ENCODE measurements at regions of chr20 and their contacts with region 1.

Region 1: GRCh38 chr20:51541189-51542032 is 1.1 kb downstream of the NFATC2 start:
- DNase-seq: peak; percentile 45 to 95 (median 74)
- ATAC-seq: peak; percentile 79
- H3K4me3 ChIP-seq: peak overlapping the region; percentile 68
- H3K4me3 Mint-ChIP-seq: peak overlapping the region; percentile 98
- H3K27ac ChIP-seq: peak overlapping the region; percentile 82 to 99
- H3K27ac Mint-ChIP-seq: peak overlapping the region; percentile 89
- H3K4me1 ChIP-seq: peaks cover 50% of the 10 kb centered on the region
- H3K4me1 Mint-ChIP-seq: peaks cover 55% of the 10 kb centered on the region
- H3K27me3 ChIP-seq: no peaks in the 10 kb centered on the region
- H3K27me3 Mint-ChIP-seq: no peaks in the 10 kb centered on the region
- CTCF ChIP-seq: no peak

Region 2: GRCh38 chr20:51385646-51386530 is 155.5 kb before region 1 on chr20:
- CTCF ChIA-PET with region 1: interaction called, 5 read pairs
- POLR2A ChIA-PET with region 1: interaction called, 3 read pairs
- intact Hi-C with region 1: loop called in 1 of 2 experiments (anchors 5 kb)
- DNase-seq: peak in 10 of 14 experiments; percentile 13 to 70 (median 34)
- ATAC-seq: peak; percentile 52
- H3K4me3 ChIP-seq: no peak overlapping the region
- H3K4me3 Mint-ChIP-seq: no peak overlapping the region
- H3K27ac ChIP-seq: no peak overlapping the region
- H3K27ac Mint-ChIP-seq: peak overlapping the region; percentile 34
- H3K4me1 ChIP-seq: peaks cover 35% of the 10 kb centered on the region
- H3K4me1 Mint-ChIP-seq: peaks cover 22% of the 10 kb centered on the region
- H3K27me3 ChIP-seq: no peaks in the 10 kb centered on the region
- H3K27me3 Mint-ChIP-seq: no peaks in the 10 kb centered on the region
- CTCF ChIP-seq: peak; percentile 57

Region 3: GRCh38 chr20:51480507-51481270 is 60.7 kb before region 1 on chr20:
- CTCF ChIA-PET with region 1: interaction called, 3 read pairs
- POLR2A ChIA-PET with region 1: interaction called, 8 read pairs
- intact Hi-C with region 1: loop called in 1 of 2 experiments (anchors 5 kb)
- DNase-seq: peak in 5 of 14 experiments; percentile 25 to 69 (median 42)
- ATAC-seq: peak; percentile 56
- H3K4me3 ChIP-seq: peak overlapping the region; percentile 12
- H3K4me3 Mint-ChIP-seq: peak overlapping the region; percentile 62
- H3K27ac ChIP-seq: peak overlapping the region; percentile 33 to 68
- H3K27ac Mint-ChIP-seq: peak overlapping the region; percentile 87
- H3K4me1 ChIP-seq: peaks cover 53% of the 10 kb centered on the region
- H3K4me1 Mint-ChIP-seq: peaks cover 90% of the 10 kb centered on the region
- H3K27me3 ChIP-seq: no peaks in the 10 kb centered on the region
- H3K27me3 Mint-ChIP-seq: no peaks in the 10 kb centered on the region
- CTCF ChIP-seq: no peak

Region 4: GRCh38 chr20:51512645-51513044 is 28.8 kb before region 1 on chr20:
- CTCF ChIA-PET with region 1: interaction called, 8 read pairs
- POLR2A ChIA-PET with region 1: interaction called, 16 read pairs
- intact Hi-C with region 1: no loop called
- DNase-seq: peak in 3 of 14 experiments; percentile 47 to 58 (median 56)
- ATAC-seq: peak; percentile 85
- H3K4me3 ChIP-seq: no peak overlapping the region
- H3K4me3 Mint-ChIP-seq: peak overlapping the region; percentile 43
- H3K27ac ChIP-seq: peak overlapping the region; percentile 32 to 35
- H3K27ac Mint-ChIP-seq: peak overlapping the region; percentile 84
- H3K4me1 ChIP-seq: peaks cover 67% of the 10 kb centered on the region
- H3K4me1 Mint-ChIP-seq: peaks cover 89% of the 10 kb centered on the region
- H3K27me3 ChIP-seq: no peaks in the 10 kb centered on the region
- H3K27me3 Mint-ChIP-seq: no peaks in the 10 kb centered on the region
- CTCF ChIP-seq: no peak

Region 5: DNA sequence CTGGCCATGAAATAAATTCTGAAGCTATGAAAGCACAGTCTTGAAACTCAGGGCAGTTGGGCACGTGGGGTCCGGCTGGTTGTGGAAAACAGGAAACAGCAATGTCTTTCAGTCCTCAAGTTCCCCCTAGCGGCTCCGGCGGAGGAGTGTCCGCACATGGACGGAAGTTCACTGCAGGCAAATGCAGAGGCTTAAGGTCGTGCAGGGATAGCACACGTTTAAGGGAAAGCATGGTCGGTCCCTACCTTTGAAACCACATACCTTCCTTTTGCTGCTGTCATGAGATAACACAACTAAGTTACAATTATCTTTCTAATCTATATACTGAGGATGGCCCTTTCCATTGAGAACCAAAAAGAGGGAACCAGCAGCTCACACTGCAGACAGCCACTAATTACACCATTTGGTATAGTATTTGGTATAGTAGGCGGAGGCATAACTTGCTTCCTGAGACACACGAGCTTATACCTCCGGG is 53.7 kb after region 1 on chr20:
- CTCF ChIA-PET with region 1: interaction called, 6 read pairs
- POLR2A ChIA-PET with region 1: interaction called, 4 read pairs
- intact Hi-C with region 1: loop called in 1 of 2 experiments (anchors 5 kb)
- DNase-seq: peak; percentile 55 to 86 (median 74)
- ATAC-seq: peak; percentile 96
- H3K4me3 ChIP-seq: no peak overlapping the region
- H3K4me3 Mint-ChIP-seq: peak overlapping the region; percentile 23
- H3K27ac ChIP-seq: no peak overlapping the region
- H3K27ac Mint-ChIP-seq: no peak overlapping the region
- H3K4me1 ChIP-seq: peaks cover 7% of the 10 kb centered on the region
- H3K4me1 Mint-ChIP-seq: peaks cover 13% of the 10 kb centered on the region
- H3K27me3 ChIP-seq: no peaks in the 10 kb centered on the region
- H3K27me3 Mint-ChIP-seq: no peaks in the 10 kb centered on the region
- CTCF ChIP-seq: peak; percentile 83

Region 6: DNA sequence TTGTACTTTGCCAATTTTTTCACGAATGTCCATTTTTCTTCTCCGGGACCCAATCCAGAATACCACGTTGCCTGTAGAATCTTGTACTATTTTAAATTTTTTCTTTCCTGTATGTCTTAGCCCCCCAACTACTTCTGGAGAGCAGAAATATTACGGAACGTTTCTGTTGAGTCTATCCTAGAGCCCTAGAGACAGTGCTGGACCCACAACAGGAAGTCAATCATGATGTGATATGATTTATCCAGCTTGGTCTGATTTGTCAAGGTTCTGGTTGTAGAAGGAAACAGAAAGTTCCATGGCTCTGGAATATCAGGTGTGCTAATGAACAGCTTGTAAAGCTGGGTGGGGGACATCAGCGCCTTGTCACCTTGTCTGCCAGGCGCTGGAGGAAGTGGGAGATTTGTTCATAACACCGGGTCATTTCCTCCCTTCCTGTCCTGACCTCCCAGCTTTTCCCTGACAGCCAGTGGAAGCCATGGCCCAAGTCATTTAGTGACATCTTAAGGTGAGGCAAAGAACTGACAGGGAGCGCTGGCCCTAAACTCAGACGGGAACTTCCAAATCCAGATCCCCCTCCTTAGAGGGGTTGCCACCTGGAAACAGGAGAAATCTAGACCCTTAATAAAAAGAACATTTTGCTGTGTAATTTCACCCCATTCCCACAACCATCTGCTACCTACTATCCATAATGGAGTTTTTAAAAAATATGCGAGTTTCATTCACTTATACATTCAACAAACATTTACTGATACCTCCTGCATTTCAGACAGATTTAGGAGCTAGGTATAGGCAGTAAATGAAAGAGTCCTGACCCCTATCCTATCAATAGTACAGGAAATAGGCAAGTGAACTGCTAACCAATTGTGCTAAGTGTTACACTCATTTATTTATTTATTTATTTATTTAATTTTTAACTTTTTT is 519.6 kb after region 1 on chr20:
- CTCF ChIA-PET with region 1: no interaction called
- POLR2A ChIA-PET with region 1: no interaction called
- intact Hi-C with region 1: no loop called
- DNase-seq: no peak
- ATAC-seq: no peak
- H3K4me3 ChIP-seq: no peak overlapping the region
- H3K4me3 Mint-ChIP-seq: no peak overlapping the region
- H3K27ac ChIP-seq: no peak overlapping the region
- H3K27ac Mint-ChIP-seq: no peak overlapping the region
- H3K4me1 ChIP-seq: no peaks in the 10 kb centered on the region
- H3K4me1 Mint-ChIP-seq: no peaks in the 10 kb centered on the region
- H3K27me3 ChIP-seq: no peaks in the 10 kb centered on the region
- H3K27me3 Mint-ChIP-seq: no peaks in the 10 kb centered on the region
- CTCF ChIP-seq: no peak